HepG2 (cell line): ENCODE measurements at regions of chr6 and their contacts with region 1.

Region 1: DNA sequence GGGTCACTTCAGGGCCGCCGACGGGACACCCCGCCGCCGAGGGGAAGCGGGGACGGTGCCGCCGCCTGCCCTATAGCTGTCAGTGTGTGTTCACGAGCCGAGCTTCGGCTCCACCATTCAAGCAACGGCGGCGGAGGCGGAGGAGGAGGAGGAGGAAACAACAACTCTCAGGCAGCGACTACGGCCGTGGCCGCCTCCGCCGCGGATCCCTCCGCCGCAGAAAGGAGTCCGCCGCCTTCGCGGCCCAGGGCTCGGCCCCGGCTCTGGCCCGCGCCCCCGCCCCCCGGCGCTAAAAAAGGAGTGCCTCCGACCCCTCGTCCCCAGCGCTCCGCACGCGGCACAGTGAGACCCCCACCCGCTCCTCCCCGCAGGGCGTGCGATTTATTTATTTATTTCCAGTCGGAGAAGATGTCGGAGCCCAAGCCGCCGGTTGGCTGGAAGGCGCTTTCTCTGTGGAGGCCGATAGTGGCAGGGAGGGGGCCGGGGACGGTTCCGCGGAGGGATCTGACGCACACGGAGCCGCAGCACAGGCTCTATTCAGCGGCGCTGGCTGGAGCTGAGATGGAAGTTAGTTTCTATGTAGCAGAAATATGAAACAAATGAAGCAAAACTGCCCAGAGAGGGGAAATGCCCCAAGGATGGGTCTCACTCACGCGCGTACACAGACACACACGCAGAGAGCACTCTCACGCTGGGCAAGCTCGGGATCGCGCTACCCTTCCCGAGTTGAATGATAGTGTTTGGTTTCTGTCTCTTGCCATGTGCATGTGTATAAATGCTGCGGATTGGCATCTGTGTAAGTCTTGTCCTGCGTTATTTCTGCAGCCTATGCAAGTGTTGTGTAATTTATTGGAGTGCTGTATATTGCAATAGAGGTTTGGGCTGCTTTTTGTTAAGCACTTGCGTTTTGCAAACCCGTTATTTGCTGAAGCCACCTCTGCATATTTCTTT is at the start of gene PHIP:
- DNase-seq: peak; percentile 84
- ATAC-seq: peak; percentile 88
- H3K4me3 ChIP-seq: peak within 1 kb of the TSS; percentile 62 to 98 (median 91)
- H3K27ac ChIP-seq: peak within 1 kb of the TSS; percentile 94
- H3K4me1 ChIP-seq: peaks cover 32% of the 10 kb centered on the region
- H3K27me3 ChIP-seq: no peaks in the 10 kb centered on the region; a peak in 1 of 5 replicates
- CTCF ChIP-seq: 0 out of 2 replicates have a peak, but pooled peaks have one; percentile 11
- EP300 ChIP-seq: no peak
- POLR2A ChIP-seq: peak; percentile 72 to 82
- RAD21 ChIP-seq: no peak
- total RNA-seq, gene PHIP: 23.5 and 36.0 TPM in 2 replicates

Region 2: GRCh38 chr6:78867370-78868040 is 210.8 kb before region 1 on chr6 and contains the start of gene IRAK1BP1:
- CTCF ChIA-PET with region 1: no interaction called
- POLR2A ChIA-PET with region 1: no interaction called
- in situ Hi-C with region 1: no loop called
- intact Hi-C with region 1: loop called (anchors 10 kb)
- DNase-seq: peak; percentile 75
- ATAC-seq: peak; percentile 99
- H3K4me3 ChIP-seq: peak within 1 kb of the TSS; percentile 80 to 88 (median 87)
- H3K27ac ChIP-seq: peak within 1 kb of the TSS; percentile 64
- H3K4me1 ChIP-seq: peaks cover 12% of the 10 kb centered on the region
- H3K27me3 ChIP-seq: no peaks in the 10 kb centered on the region
- CTCF ChIP-seq: peak; percentile 38; the same call in 1 of the 2 replicates
- EP300 ChIP-seq: no peak
- POLR2A ChIP-seq: peak; percentile 50 to 65
- RAD21 ChIP-seq: peak; percentile 33; the same call in 1 of the 2 replicates
- total RNA-seq, gene IRAK1BP1: 1.5 and 1.9 TPM in 2 replicates

Region 3: DNA sequence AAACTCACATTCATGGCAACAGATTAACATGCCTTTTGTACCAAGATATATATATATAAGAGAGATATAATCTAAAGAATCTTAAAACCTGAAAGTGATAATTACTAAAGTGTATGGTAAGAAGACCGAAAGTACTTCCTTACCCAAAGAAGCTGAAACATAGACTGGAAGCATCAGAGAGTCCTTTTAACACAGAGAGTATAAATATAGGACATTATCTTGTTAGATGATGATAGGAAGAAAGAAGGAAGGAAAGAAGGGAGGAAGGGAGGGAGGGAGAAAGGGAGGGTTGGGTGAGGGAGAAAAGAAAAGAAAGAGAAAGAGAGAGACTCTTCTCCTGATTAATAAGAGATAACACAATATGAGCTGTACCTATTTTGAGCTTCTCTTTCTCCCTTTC is 68.5 kb before region 1 on chr6:
- CTCF ChIA-PET with region 1: no interaction called
- POLR2A ChIA-PET with region 1: no interaction called
- in situ Hi-C with region 1: no loop called
- intact Hi-C with region 1: no loop called
- DNase-seq: no peak
- ATAC-seq: no peak
- H3K4me3 ChIP-seq: no peak overlapping the region
- H3K27ac ChIP-seq: no peak overlapping the region
- H3K4me1 ChIP-seq: no peaks in the 10 kb centered on the region
- H3K27me3 ChIP-seq: no peaks in the 10 kb centered on the region
- CTCF ChIP-seq: no peak
- EP300 ChIP-seq: no peak
- POLR2A ChIP-seq: no peak
- RAD21 ChIP-seq: no peak

Region 4: GRCh38 chr6:79034865-79035264 is 43.5 kb before region 1 on chr6:
- CTCF ChIA-PET with region 1: no interaction called
- POLR2A ChIA-PET with region 1: no interaction called
- in situ Hi-C with region 1: no loop called
- intact Hi-C with region 1: loop called (anchors 5 kb)
- DNase-seq: no peak
- ATAC-seq: no peak
- H3K4me3 ChIP-seq: no peak overlapping the region
- H3K27ac ChIP-seq: no peak overlapping the region
- H3K4me1 ChIP-seq: peaks cover 19% of the 10 kb centered on the region
- H3K27me3 ChIP-seq: no peaks in the 10 kb centered on the region
- CTCF ChIP-seq: no peak
- EP300 ChIP-seq: no peak
- POLR2A ChIP-seq: no peak
- RAD21 ChIP-seq: no peak

Region 5: DNA sequence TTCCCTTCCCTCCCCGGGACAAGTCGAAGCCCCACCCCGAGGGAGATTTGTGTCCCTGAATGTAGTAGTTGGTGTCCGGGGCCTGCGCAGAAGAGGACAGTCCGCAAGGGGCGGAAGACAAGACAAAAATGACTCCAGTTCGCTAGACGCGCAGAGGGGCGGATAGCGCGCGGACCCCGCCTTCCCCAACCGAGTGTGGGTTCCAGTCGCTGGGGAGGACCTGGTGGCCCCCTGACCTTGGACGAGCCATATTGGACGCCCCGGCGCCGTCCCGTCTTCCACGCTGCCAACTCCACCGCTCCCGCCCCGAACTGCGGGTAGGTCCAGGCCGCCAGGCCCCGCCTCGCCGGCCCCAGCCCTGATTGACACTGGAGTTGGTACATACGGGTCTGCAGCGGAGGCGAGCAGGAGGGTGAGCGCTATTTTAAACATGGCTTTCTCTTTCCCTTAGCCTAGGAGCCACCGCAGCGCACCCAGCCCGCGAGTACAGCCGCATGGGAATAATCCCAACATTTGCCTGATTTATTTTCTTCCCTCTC is 155.3 kb after region 1 on chr6:
- CTCF ChIA-PET with region 1: no interaction called
- POLR2A ChIA-PET with region 1: no interaction called
- in situ Hi-C with region 1: no loop called
- intact Hi-C with region 1: loop called (anchors 2 kb)
- DNase-seq: peak; percentile 84
- ATAC-seq: peak; percentile 95
- H3K4me3 ChIP-seq: peak overlapping the region; percentile 61 to 79 (median 77)
- H3K27ac ChIP-seq: peak overlapping the region; percentile 84
- H3K4me1 ChIP-seq: peaks cover 21% of the 10 kb centered on the region
- H3K27me3 ChIP-seq: no peaks in the 10 kb centered on the region
- CTCF ChIP-seq: peak; percentile 29; the same call in 1 of the 2 replicates
- EP300 ChIP-seq: 0 out of 4 replicates have a peak, but pooled peaks of 1 of the 2 experiments have one; percentile 4
- POLR2A ChIP-seq: peak; percentile 59 to 64; a peak in 3 of 4 replicates
- RAD21 ChIP-seq: peak; percentile 52; the same call in 1 of the 2 replicates

Region 6: GRCh38 chr6:79413562-79414002 is 335.2 kb after region 1 on chr6:
- CTCF ChIA-PET with region 1: no interaction called
- POLR2A ChIA-PET with region 1: no interaction called
- in situ Hi-C with region 1: no loop called
- intact Hi-C with region 1: no loop called
- DNase-seq: no peak
- ATAC-seq: no peak
- H3K4me3 ChIP-seq: no peak overlapping the region
- H3K27ac ChIP-seq: no peak overlapping the region
- H3K4me1 ChIP-seq: no peaks in the 10 kb centered on the region
- H3K27me3 ChIP-seq: no peaks in the 10 kb centered on the region
- CTCF ChIP-seq: no peak
- EP300 ChIP-seq: no peak
- POLR2A ChIP-seq: no peak
- RAD21 ChIP-seq: no peak

Region 7: GRCh38 chr6:79466207-79466834 is 388.0 kb after region 1 on chr6:
- CTCF ChIA-PET with region 1: no interaction called
- POLR2A ChIA-PET with region 1: no interaction called
- in situ Hi-C with region 1: no loop called
- intact Hi-C with region 1: loop called (anchors 5 kb)
- DNase-seq: no peak
- ATAC-seq: no peak
- H3K4me3 ChIP-seq: no peak overlapping the region
- H3K27ac ChIP-seq: no peak overlapping the region
- H3K4me1 ChIP-seq: peaks cover 76% of the 10 kb centered on the region
- H3K27me3 ChIP-seq: no peaks in the 10 kb centered on the region
- CTCF ChIP-seq: peak; percentile 51
- EP300 ChIP-seq: no peak
- POLR2A ChIP-seq: no peak
- RAD21 ChIP-seq: no peak

Region 8: GRCh38 chr6:79536954-79537747 is 458.8 kb after region 1 on chr6 and contains the start of gene LCA5:
- CTCF ChIA-PET with region 1: no interaction called
- POLR2A ChIA-PET with region 1: interaction called, 3 read pairs
- in situ Hi-C with region 1: no loop called
- intact Hi-C with region 1: loop called (anchors 5 kb)
- DNase-seq: peak; percentile 97
- ATAC-seq: peak; percentile 99
- H3K4me3 ChIP-seq: peak within 1 kb of the TSS; percentile 84 to 97 (median 95)
- H3K27ac ChIP-seq: peak within 1 kb of the TSS; percentile 64
- H3K4me1 ChIP-seq: peaks cover 43% of the 10 kb centered on the region
- H3K27me3 ChIP-seq: no peaks in the 10 kb centered on the region
- CTCF ChIP-seq: no peak
- EP300 ChIP-seq: 0 out of 4 replicates have a peak, but pooled peaks of 1 of the 2 experiments have one; percentile 22
- POLR2A ChIP-seq: peak; percentile 78 to 86
- RAD21 ChIP-seq: 0 out of 2 replicates have a peak, but pooled peaks have one; percentile 18
- total RNA-seq, gene LCA5: 4.6 and 7.7 TPM in 2 replicates

Region 9: DNA sequence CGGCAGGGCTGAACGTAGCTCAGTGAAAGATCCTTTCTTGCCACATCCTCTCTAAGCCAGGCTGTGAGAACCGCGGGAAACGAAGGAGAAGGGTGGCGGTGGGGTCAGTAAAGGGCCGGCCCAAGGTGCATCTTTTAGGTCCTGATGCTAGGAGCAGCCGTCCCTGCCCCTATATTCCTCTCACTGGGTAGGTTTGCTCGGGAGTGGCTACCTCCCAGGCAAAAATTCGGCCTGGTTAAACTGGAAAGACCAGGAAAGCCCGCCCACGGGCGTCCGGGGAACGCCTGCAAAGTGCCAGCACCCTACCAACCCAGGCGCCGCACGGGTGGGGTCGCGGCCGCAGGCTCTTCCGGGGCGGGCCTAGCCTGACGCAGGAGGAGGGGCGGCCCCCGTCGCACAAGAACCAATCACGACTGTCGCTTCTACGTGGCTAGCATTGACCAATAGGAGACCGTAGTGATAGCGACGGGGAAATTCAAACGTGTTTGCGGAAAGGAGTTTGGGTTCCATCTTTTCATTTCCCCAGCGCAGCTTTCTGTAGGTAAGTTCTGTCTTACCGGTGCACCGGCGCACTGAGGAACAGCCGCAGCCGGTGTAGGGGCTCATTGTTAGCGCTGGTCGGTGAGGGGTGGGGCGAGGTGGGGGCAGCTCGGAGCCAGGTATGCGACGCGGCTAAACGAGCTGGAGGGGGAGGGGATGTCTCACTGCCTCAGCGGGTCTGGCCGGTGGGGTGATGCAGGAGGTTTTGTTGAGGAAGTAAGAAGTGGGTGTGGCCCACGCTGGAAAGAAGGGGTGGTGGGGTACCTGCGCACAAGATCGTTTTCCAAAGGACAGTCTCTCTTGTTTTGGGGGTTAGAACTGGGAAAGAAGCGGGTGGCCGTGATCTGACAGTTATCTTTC is 926.1 kb after region 1 on chr6 and contains the start of gene TTK:
- CTCF ChIA-PET with region 1: no interaction called
- POLR2A ChIA-PET with region 1: no interaction called
- in situ Hi-C with region 1: no loop called
- intact Hi-C with region 1: loop called (anchors 5 kb)
- DNase-seq: peak; percentile 93
- ATAC-seq: peak; percentile 99
- H3K4me3 ChIP-seq: peak within 1 kb of the TSS; percentile 80 to 96 (median 91)
- H3K27ac ChIP-seq: peak within 1 kb of the TSS; percentile 85
- H3K4me1 ChIP-seq: peaks cover 26% of the 10 kb centered on the region
- H3K27me3 ChIP-seq: no peaks in the 10 kb centered on the region; a peak in 1 of 5 replicates
- CTCF ChIP-seq: no peak
- EP300 ChIP-seq: no peak
- POLR2A ChIP-seq: peak; percentile 51 to 78; a peak in 3 of 4 replicates
- RAD21 ChIP-seq: no peak
- total RNA-seq, gene TTK: 33.2 and 53.3 TPM in 2 replicates